WTC11 (cell line): ENCODE measurements at regions of chr6 and their contacts with region 1.

Region 1: DNA sequence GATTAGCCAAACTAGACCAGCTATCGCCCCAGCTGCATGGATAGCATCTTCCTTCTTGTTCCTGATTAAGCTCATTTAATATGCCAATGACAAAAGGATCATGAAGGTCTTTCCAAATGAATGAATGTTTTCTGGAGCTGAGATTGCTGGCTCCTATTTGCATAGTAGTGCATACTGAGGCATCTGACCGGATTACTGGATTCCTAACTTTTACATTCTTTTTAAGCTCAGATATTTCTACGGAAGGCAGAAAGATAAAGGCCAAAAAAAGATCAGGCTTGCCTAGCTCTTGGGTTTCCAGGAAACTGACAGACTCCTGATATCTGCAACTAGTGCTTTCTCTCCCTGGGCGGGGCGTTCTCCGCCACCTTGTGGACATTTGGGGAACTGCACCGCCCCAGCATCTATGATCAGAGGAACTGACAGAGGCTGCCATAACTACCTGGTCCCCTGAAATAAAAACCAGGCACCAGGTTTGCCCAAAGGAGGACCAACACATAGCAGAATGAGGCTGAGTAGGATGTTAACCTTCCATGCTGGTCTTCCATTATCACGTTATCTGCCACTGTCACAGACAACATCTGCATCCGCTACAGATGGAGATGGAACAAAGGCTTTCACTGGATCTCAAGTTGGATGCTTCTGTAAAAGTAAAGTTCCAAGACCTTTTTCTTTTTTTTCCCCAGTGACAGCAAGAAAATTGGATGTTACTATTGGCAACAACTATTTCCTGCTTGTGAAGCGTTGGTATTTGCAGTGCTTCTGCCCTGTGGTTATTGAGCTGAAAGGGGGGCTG is 33.2 kb downstream of the NT5E start:
- DNase-seq: peak; percentile 90
- ATAC-seq: peak; percentile 98
- H3K4me3 Mint-ChIP-seq: no peak overlapping the region
- H3K27ac Mint-ChIP-seq: no peak overlapping the region
- H3K4me1 Mint-ChIP-seq: peaks cover 4% of the 10 kb centered on the region; the same call in 1 of the 2 replicates
- H3K27me3 Mint-ChIP-seq: peaks cover 2% of the 10 kb centered on the region; the same call in 1 of the 2 replicates
- CTCF ChIP-seq: peak; percentile 100

Region 2: GRCh38 chr6:85354761-85355618 is 128.1 kb before region 1 on chr6:
- CTCF ChIA-PET with region 1: interaction called, 117 read pairs
- POLR2A ChIA-PET with region 1: no interaction called
- DNase-seq: peak; percentile 78
- ATAC-seq: peak; percentile 98
- H3K4me3 Mint-ChIP-seq: no peak overlapping the region
- H3K27ac Mint-ChIP-seq: no peak overlapping the region
- H3K4me1 Mint-ChIP-seq: no peaks in the 10 kb centered on the region
- H3K27me3 Mint-ChIP-seq: no peaks in the 10 kb centered on the region
- CTCF ChIP-seq: peak; percentile 98

Region 3: DNA sequence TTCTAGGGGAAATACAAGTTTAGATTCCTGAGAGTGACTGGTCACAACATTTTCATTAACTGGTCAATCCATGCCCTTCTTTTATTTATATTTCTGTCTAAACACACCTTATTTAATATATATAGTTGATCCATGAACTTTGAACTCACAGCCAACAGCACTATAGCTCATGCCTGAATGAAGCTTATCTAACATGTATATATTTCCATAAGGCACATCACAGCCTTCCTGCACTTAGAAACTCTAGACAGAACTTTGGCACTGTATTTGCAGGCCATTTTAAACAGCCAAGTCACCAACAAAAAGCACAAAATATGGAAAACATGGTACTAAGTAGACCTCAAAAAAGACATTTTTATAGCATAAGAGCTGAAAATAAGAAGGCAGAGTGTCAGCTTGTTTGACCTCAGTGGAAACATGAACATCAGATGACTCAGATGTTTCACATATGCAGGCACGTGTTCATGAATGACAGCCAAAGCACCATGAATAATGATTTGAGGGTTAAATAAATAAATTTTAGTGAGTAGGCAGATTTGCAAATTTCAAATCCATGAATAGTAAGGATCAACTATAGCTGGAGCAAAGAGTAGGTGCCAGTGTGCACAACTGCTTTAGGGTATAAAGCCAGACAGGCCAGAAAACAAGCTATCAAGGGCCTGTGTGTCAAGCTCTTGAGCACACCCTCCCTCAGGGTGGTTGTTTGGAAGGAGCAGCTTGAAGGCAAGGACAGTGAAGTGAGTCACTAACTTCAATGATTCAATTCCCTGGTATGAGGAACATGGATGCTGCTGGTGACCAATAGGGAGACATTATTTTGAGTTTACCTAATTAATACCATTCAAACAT is 122.1 kb before region 1 on chr6:
- CTCF ChIA-PET with region 1: interaction called, 117 read pairs
- POLR2A ChIA-PET with region 1: no interaction called
- DNase-seq: no peak
- ATAC-seq: no peak
- H3K4me3 Mint-ChIP-seq: no peak overlapping the region
- H3K27ac Mint-ChIP-seq: no peak overlapping the region
- H3K4me1 Mint-ChIP-seq: no peaks in the 10 kb centered on the region
- H3K27me3 Mint-ChIP-seq: no peaks in the 10 kb centered on the region
- CTCF ChIP-seq: no peak

Region 4: GRCh38 chr6:85421997-85422401 is 61.1 kb before region 1 on chr6:
- CTCF ChIA-PET with region 1: interaction called, 13 read pairs
- POLR2A ChIA-PET with region 1: no interaction called
- DNase-seq: no peak
- ATAC-seq: no peak
- H3K4me3 Mint-ChIP-seq: no peak overlapping the region
- H3K27ac Mint-ChIP-seq: no peak overlapping the region
- H3K4me1 Mint-ChIP-seq: no peaks in the 10 kb centered on the region; the same call in 1 of the 2 replicates
- H3K27me3 Mint-ChIP-seq: no peaks in the 10 kb centered on the region
- CTCF ChIP-seq: no peak

Region 5: GRCh38 chr6:85436411-85436810 is 46.7 kb before region 1 on chr6:
- CTCF ChIA-PET with region 1: no interaction called
- POLR2A ChIA-PET with region 1: no interaction called
- DNase-seq: no peak
- ATAC-seq: no peak
- H3K4me3 Mint-ChIP-seq: no peak overlapping the region
- H3K27ac Mint-ChIP-seq: no peak overlapping the region
- H3K4me1 Mint-ChIP-seq: peaks cover 8% of the 10 kb centered on the region
- H3K27me3 Mint-ChIP-seq: no peaks in the 10 kb centered on the region; the same call in 1 of the 2 replicates
- CTCF ChIP-seq: no peak

Region 6: DNA sequence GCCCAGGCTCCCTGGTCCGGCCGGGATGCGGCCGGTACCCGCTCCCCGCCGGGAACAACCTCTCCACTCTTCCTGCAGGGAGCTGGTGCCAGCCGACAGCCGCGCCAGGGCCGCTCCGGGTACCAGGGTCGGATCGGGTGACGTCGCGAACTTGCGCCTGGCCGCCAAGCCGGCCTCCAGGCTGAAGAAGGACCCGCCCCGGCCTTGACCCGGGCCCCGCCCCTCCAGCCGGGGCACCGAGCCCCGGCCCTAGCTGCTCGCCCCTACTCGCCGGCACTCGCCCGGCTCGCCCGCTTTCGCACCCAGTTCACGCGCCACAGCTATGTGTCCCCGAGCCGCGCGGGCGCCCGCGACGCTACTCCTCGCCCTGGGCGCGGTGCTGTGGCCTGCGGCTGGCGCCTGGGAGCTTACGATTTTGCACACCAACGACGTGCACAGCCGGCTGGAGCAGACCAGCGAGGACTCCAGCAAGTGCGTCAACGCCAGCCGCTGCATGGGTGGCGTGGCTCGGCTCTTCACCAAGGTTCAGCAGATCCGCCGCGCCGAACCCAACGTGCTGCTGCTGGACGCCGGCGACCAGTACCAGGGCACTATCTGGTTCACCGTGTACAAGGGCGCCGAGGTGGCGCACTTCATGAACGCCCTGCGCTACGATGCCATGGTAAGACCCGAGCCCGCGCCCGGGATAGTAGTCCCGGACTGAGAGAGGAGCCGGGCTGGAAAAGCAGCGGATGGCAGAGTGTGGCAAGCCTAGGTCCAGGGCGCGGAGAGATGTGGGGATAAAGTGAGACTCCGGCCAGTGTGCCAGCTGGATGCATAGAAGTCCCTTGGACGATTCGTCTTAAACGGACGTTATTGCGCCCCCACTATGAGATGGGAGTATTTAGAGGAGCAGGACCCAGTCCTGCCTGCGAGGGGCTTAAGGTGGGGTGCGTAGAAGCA is 33.0 kb before region 1 on chr6 and contains the start of gene NT5E:
- CTCF ChIA-PET with region 1: interaction called, 28 read pairs
- POLR2A ChIA-PET with region 1: no interaction called
- DNase-seq: peak; percentile 85
- ATAC-seq: peak; percentile 93
- H3K4me3 Mint-ChIP-seq: peak within 1 kb of the TSS; percentile 80
- H3K27ac Mint-ChIP-seq: no peak within 1 kb of the TSS
- H3K4me1 Mint-ChIP-seq: peaks cover 13% of the 10 kb centered on the region
- H3K27me3 Mint-ChIP-seq: peaks cover 91% of the 10 kb centered on the region
- CTCF ChIP-seq: no peak
- total RNA-seq, gene NT5E: 0.62 to 0.94 TPM (median 0.81 TPM) in 3 replicates

Region 7: GRCh38 chr6:85460921-85461797 is 21.9 kb before region 1 on chr6:
- CTCF ChIA-PET with region 1: interaction called, 24 read pairs
- POLR2A ChIA-PET with region 1: no interaction called
- DNase-seq: no peak
- ATAC-seq: no peak
- H3K4me3 Mint-ChIP-seq: no peak overlapping the region
- H3K27ac Mint-ChIP-seq: no peak overlapping the region
- H3K4me1 Mint-ChIP-seq: peaks cover 30% of the 10 kb centered on the region
- H3K27me3 Mint-ChIP-seq: no peaks in the 10 kb centered on the region; the same call in 1 of the 2 replicates
- CTCF ChIP-seq: no peak

Region 8: GRCh38 chr6:85472749-85473148 is 10.4 kb before region 1 on chr6:
- CTCF ChIA-PET with region 1: interaction called, 14 read pairs
- POLR2A ChIA-PET with region 1: no interaction called
- DNase-seq: no peak
- ATAC-seq: no peak
- H3K4me3 Mint-ChIP-seq: no peak overlapping the region
- H3K27ac Mint-ChIP-seq: no peak overlapping the region
- H3K4me1 Mint-ChIP-seq: peaks cover 6% of the 10 kb centered on the region
- H3K27me3 Mint-ChIP-seq: peaks cover 2% of the 10 kb centered on the region; the same call in 1 of the 2 replicates
- CTCF ChIP-seq: no peak

Region 9: GRCh38 chr6:85703406-85703805 is 220.3 kb after region 1 on chr6:
- CTCF ChIA-PET with region 1: no interaction called
- POLR2A ChIA-PET with region 1: no interaction called
- DNase-seq: no peak
- ATAC-seq: no peak
- H3K4me3 Mint-ChIP-seq: no peak overlapping the region
- H3K27ac Mint-ChIP-seq: no peak overlapping the region
- H3K4me1 Mint-ChIP-seq: no peaks in the 10 kb centered on the region
- H3K27me3 Mint-ChIP-seq: peaks cover 6% of the 10 kb centered on the region; the same call in 1 of the 2 replicates
- CTCF ChIP-seq: no peak